IMR-90 (cell line): ENCODE measurements at regions of chr17 and their contacts with region 1.

Region 1: GRCh38 chr17:45385331-45385997 is 47.2 kb downstream of the ARHGAP27 start:
- DNase-seq: peak; percentile 76
- ATAC-seq: peak; percentile 90
- H3K4me3 ChIP-seq: no peak overlapping the region
- H3K27ac ChIP-seq: no peak overlapping the region; the same call in 1 of the 2 replicates
- H3K4me1 ChIP-seq: peaks cover 5% of the 10 kb centered on the region; the same call in 1 of the 2 replicates
- H3K27me3 ChIP-seq: peaks cover 9% of the 10 kb centered on the region; the same call in 1 of the 2 replicates
- CTCF ChIP-seq: peak; percentile 99
- POLR2A ChIP-seq: peak; percentile 66; the same call in 1 of the 2 replicates
- RAD21 ChIP-seq: peak; percentile 100

Region 2: GRCh38 chr17:45184144-45184543 is 201.3 kb before region 1 on chr17:
- CTCF ChIA-PET with region 1: no interaction called
- POLR2A ChIA-PET with region 1: no interaction called
- dilution Hi-C with region 1: no loop called
- in situ Hi-C with region 1: no loop called
- intact Hi-C with region 1: no loop called
- DNase-seq: no peak
- ATAC-seq: no peak
- H3K4me3 ChIP-seq: no peak overlapping the region
- H3K27ac ChIP-seq: no peak overlapping the region
- H3K4me1 ChIP-seq: no peaks in the 10 kb centered on the region
- H3K27me3 ChIP-seq: no peaks in the 10 kb centered on the region
- CTCF ChIP-seq: no peak
- POLR2A ChIP-seq: no peak
- RAD21 ChIP-seq: no peak

Region 3: DNA sequence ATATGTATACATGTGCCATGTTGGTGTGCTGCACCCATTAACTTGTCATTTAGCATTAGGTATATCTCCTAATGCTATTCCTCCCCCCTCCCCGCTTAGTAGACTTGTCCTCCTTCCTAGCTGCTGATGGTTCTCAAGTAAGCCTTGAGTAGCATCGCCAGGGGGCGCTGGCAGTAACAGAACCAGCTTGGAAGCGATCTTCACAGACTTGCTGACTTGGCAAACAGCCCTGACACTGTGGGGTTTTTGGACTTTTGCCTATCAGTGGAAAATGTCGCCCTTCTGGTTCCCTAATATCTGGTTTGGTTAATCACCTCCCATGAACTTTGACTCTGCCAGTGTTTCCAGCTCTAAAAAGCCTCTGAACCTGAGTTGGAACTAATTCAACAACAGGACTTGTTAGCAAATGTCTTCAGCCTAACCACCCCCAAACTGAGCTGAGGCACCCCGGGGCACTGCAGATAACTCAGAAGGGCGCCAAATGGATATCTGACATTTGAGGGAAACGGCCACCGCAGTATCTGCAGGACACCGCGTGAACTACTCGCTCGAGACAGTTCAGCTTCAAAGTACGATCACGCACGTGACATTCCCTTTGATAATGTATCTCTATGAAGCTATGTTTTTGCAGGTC is 108.1 kb before region 1 on chr17:
- CTCF ChIA-PET with region 1: interaction called, 16 read pairs
- POLR2A ChIA-PET with region 1: interaction called, 3 read pairs
- dilution Hi-C with region 1: no loop called
- in situ Hi-C with region 1: loop called (anchors 5 kb)
- intact Hi-C with region 1: loop called (anchors 1 kb)
- DNase-seq: peak; percentile 91
- ATAC-seq: peak; percentile 73
- H3K4me3 ChIP-seq: no peak overlapping the region
- H3K27ac ChIP-seq: no peak overlapping the region
- H3K4me1 ChIP-seq: peaks cover 3% of the 10 kb centered on the region; the same call in 1 of the 2 replicates
- H3K27me3 ChIP-seq: no peaks in the 10 kb centered on the region
- CTCF ChIP-seq: peak; percentile 83
- POLR2A ChIP-seq: no peak
- RAD21 ChIP-seq: peak; percentile 86

Region 4: DNA sequence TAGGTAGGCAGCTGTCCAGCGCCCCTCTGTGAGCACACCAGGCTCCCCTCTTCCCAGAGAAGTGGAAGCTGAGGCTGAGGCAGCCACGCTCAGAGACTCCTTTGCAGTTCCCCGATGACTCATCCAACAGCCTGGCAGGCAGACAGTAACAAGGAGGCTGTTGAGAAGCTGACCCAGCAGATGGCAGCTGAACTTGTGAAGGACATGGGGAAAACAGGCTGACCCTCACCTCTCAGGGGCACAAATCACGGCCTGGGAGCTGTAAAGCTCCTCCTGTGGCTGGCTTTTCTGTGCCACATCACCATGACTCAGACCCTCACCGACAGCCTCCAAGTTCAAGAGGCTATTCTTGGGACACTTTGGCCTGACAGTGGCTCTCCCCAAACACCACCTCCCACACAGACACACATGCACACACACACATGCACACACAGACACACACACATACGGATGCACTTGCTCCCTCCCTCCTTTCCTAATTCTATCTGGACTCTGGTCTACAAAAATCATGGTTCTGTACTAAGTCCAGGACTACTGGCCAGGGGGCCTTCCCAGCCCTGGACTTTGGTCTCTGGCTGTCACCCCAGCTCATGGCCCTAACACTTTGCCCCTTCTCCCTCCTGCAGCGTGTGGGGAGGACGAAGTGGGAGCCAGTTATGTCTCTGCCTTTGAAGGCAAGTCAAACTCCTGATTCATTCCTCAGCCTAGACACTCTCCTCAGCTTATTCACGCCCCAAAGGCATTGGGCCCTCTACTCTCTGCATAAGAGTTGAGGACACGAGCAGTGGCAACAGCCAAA is 91.9 kb before region 1 on chr17:
- CTCF ChIA-PET with region 1: interaction called, 4 read pairs
- POLR2A ChIA-PET with region 1: no interaction called
- dilution Hi-C with region 1: no loop called
- in situ Hi-C with region 1: no loop called
- intact Hi-C with region 1: loop called (anchors 5 kb)
- DNase-seq: peak; percentile 91
- ATAC-seq: peak; percentile 83
- H3K4me3 ChIP-seq: no peak overlapping the region
- H3K27ac ChIP-seq: peak overlapping the region; percentile 35
- H3K4me1 ChIP-seq: peaks cover 38% of the 10 kb centered on the region
- H3K27me3 ChIP-seq: no peaks in the 10 kb centered on the region
- CTCF ChIP-seq: peak; percentile 32; the same call in 1 of the 2 replicates
- POLR2A ChIP-seq: no peak
- RAD21 ChIP-seq: peak; percentile 29

Region 5: GRCh38 chr17:45317112-45317928 is 68.1 kb before region 1 on chr17:
- CTCF ChIA-PET with region 1: interaction called, 4 read pairs
- POLR2A ChIA-PET with region 1: interaction called, 7 read pairs
- dilution Hi-C with region 1: no loop called
- in situ Hi-C with region 1: no loop called
- intact Hi-C with region 1: loop called (anchors 2 kb)
- DNase-seq: peak; percentile 100
- ATAC-seq: peak; percentile 85
- H3K4me3 ChIP-seq: peak overlapping the region; percentile 42
- H3K27ac ChIP-seq: peak overlapping the region; percentile 62
- H3K4me1 ChIP-seq: peaks cover 47% of the 10 kb centered on the region
- H3K27me3 ChIP-seq: no peaks in the 10 kb centered on the region
- CTCF ChIP-seq: no peak
- POLR2A ChIP-seq: no peak
- RAD21 ChIP-seq: 0 out of 2 replicates have a peak, but pooled peaks have one; percentile 14